ENCODE measurements at regions of chr9 and their contacts with region 1.

Region 1: GRCh38 chr9:113807173-113808061 is 68.7 kb upstream of the ZNF618 start:
- DNase-seq: peak; percentile 71
- H3K4me3 ChIP-seq: peak overlapping the region; percentile 5
- H3K27ac ChIP-seq: no peak overlapping the region
- H3K4me1 ChIP-seq: peaks cover 4% of the 10 kb centered on the region
- H3K27me3 ChIP-seq: no peaks in the 10 kb centered on the region
- CTCF ChIP-seq: peak; percentile 93

Region 2: DNA sequence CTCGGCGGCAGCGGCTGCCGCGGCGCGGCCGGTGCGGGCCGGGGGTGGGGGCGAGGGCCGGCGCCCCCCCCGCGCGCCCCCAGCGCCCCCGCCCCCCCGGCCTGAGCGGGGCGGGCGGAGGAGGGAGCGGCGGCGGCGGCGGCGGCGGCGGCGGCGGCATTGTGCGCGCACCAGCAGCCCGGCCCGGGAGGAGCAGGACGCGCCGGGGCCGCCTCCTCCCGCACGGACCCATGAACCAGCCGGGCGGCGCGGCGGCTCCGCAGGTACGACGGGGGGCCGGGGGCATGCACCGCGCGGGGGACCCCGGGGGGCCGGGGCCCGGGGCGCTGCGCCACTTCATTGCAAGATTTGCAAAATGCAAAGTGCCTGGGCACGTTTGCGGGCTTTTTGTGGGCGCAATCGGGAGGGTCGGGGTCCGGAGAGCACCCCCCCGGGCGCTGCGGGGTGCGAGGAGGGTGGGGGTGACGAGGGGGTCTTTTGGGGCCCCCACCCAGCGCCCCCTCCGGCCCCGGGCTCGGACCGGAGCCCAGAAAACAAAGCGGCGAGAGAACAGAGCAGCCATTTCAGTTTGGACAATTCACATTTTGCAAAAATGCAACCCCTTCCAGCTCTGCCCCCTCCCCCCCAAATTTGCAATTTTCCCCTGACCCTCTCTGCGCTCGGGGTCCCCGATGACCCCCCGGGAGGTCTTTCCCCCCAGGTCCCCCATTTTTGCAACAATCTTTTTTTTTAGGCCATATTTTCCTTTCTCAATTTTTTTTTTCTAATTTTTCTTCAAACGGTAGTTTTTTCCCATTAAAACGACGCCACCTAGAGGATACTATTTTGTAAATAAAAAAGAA is 69.0 kb after region 1 on chr9 and contains the start of gene ZNF618:
- CTCF ChIA-PET with region 1: no interaction called
- POLR2A ChIA-PET with region 1: no interaction called
- intact Hi-C with region 1: loop called (anchors 5 kb)
- DNase-seq: peak; percentile 62
- H3K4me3 ChIP-seq: peak within 1 kb of the TSS; percentile 94
- H3K27ac ChIP-seq: peak within 1 kb of the TSS; percentile 93
- H3K4me1 ChIP-seq: peaks cover 14% of the 10 kb centered on the region
- H3K27me3 ChIP-seq: no peaks in the 10 kb centered on the region
- CTCF ChIP-seq: peak; percentile 74
- total RNA-seq, gene ZNF618: 29.4 and 36.5 TPM in 2 replicates

Region 3: DNA sequence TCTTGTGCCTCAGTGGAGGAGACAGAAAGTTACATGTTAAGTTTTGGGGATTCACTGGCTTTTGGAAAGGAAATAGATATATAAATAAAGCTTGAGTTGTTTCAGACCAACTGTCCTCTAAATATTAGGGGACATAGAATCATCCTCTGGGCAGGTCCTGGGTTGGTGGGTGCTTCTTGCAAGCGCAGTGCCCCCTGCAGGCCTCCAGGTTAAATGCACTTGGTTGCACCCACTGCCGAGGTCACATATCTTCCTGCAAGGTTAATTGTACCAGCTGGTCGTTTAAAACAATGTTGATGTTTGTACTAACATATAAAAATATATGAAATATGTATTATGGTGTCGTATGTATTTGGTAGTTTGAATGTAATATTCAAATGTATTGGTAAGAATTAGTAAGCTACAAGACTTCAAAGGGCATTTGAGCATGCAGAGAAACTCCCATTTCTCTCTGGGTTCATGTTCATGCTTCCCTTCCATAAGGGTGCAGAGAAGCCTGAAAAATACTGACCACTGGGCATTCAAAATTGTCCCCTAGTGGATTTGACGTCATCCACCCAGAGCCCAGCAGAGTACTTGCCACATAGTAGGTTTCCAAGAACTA is 155.7 kb after region 1 on chr9:
- CTCF ChIA-PET with region 1: no interaction called
- POLR2A ChIA-PET with region 1: no interaction called
- intact Hi-C with region 1: loop called (anchors 5 kb)
- DNase-seq: peak; percentile 76
- H3K4me3 ChIP-seq: no peak overlapping the region
- H3K27ac ChIP-seq: peak overlapping the region; percentile 96
- H3K4me1 ChIP-seq: peaks cover 56% of the 10 kb centered on the region
- H3K27me3 ChIP-seq: no peaks in the 10 kb centered on the region
- CTCF ChIP-seq: peak; percentile 94

Region 4: DNA sequence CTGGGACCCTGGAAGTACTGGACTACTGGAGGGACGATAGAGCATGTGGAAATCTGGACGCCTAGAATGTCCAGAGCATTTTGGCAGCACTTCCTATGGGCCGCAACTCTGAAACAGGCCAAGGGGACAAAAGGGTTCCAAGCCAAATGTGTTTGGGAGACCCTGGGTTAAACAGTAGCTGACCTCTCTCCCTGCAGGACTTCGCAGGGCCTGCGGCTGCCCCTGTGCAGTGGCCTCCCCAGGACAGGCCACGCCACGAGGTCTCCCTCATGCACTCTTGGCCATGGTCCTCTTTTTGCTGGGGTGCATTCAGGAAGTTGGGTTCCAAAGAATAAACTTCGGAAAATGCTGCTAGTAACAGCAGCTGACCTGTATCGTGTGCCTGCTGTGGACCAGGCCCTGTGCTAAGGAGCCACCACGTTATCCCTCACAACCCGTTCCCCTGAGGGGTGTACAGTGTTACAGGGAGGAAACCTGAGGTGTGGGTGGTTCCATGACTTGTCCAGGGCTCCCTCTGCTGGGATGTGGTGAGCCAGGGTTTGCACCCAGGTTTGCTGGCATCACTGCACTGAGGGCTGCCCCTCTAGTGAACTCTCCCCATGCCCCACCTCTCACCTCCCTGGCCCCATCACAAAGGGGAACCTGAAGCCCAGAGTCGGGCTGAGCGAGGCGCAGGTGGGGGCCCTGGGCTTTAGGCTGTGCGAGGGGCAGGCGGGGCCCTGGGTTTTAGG is 191.3 kb after region 1 on chr9:
- CTCF ChIA-PET with region 1: no interaction called
- POLR2A ChIA-PET with region 1: interaction called, 5 read pairs
- intact Hi-C with region 1: loop called (anchors 2 kb)
- DNase-seq: peak; percentile 62
- H3K4me3 ChIP-seq: no peak overlapping the region
- H3K27ac ChIP-seq: peak overlapping the region; percentile 1
- H3K4me1 ChIP-seq: peaks cover 49% of the 10 kb centered on the region
- H3K27me3 ChIP-seq: no peaks in the 10 kb centered on the region
- CTCF ChIP-seq: peak; percentile 56

Region 5: DNA sequence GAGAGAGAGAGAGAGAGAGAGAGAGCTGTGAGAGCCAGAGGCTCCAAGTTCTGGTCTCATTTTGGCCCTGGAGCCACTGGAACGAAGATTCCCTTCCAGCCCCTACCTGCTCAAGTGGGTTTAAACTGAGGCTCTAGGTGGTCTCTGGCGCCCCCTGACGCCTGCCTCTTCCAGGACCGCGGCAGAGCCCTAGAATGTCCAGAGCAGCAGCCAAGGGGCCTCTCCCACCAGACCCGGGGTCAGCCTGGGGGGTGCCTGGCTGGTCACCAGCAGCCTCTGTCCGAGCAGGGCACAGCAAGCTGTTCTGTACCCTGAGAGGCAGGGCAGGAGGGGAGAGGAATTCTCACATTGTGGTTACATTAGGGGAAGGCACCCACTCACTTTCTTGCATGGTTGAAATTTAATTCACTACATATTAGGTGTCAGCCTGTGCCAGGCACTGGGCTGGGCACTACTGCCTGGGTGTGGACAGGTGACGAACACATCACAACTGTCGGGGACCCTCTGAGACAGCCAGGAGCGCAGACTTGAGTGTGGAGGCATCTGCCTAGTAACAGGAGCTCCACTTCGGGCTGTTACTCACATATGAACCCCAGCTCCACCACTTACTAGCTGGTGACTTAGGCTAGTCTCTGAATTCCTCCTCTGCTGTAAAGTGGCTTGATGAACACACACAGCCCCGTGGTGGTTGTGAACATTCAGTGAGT is 226.1 kb after region 1 on chr9:
- CTCF ChIA-PET with region 1: no interaction called
- POLR2A ChIA-PET with region 1: no interaction called
- intact Hi-C with region 1: loop called (anchors 2 kb)
- DNase-seq: peak; percentile 48
- H3K4me3 ChIP-seq: no peak overlapping the region
- H3K27ac ChIP-seq: no peak overlapping the region
- H3K4me1 ChIP-seq: peaks cover 7% of the 10 kb centered on the region
- H3K27me3 ChIP-seq: no peaks in the 10 kb centered on the region
- CTCF ChIP-seq: peak; percentile 66

Region 6: GRCh38 chr9:114047717-114048116 is 240.3 kb after region 1 on chr9:
- CTCF ChIA-PET with region 1: no interaction called
- POLR2A ChIA-PET with region 1: no interaction called
- intact Hi-C with region 1: loop called (anchors 2 kb)
- DNase-seq: peak; percentile 26
- H3K4me3 ChIP-seq: no peak overlapping the region
- H3K27ac ChIP-seq: no peak overlapping the region
- H3K4me1 ChIP-seq: no peaks in the 10 kb centered on the region
- H3K27me3 ChIP-seq: no peaks in the 10 kb centered on the region
- CTCF ChIP-seq: peak; percentile 34; the same call in 1 of the 2 replicates